ENCODE measurements at regions of chr9 and their contacts with region 1.

Region 1: DNA sequence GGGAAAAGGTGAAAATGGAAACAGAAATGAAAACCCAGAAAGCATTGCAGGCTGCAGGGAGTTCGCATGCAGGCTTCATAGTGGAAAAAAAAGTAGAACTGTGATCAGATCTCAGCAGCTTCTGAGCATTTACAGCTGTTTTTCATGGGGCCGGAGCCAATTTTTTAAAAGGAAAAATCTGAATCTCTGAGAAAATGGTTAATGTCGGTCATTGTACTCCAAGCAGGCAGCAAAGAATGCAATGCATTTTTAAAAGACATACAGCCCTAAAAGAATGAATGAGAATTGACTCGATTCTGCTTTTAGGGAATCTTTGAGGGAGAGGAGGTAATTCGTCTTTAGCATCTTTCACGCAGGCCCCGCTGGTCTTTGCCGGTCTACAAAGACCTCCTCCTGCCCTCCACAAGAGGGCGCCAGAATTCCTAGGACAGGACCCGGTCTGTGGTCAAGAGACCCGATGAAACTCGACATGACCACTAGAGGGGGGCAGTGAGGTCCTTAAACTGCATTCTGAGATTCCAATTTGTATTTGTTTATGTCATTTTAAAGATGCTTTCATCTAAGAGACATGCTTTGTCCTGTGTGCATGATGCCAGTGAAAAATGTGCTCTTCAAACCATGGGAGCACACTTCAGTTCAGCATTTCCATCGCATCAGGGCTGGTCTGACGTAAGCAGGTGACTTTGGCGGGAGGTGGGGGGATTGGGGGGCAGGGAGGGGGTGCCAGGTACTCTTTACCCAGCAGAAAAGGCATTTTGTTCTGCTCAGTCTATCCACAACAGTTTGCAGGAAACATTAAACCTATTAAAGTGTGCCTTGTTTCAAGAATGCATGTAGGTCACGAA is 43.7 kb upstream of the TMEM252 start:
- DNase-seq: peak; percentile 71
- H3K4me3 Mint-ChIP-seq: no peak overlapping the region
- H3K27ac Mint-ChIP-seq: peak overlapping the region; percentile 44
- H3K4me1 Mint-ChIP-seq: peaks cover 14% of the 10 kb centered on the region
- H3K27me3 Mint-ChIP-seq: no peaks in the 10 kb centered on the region

Region 2: DNA sequence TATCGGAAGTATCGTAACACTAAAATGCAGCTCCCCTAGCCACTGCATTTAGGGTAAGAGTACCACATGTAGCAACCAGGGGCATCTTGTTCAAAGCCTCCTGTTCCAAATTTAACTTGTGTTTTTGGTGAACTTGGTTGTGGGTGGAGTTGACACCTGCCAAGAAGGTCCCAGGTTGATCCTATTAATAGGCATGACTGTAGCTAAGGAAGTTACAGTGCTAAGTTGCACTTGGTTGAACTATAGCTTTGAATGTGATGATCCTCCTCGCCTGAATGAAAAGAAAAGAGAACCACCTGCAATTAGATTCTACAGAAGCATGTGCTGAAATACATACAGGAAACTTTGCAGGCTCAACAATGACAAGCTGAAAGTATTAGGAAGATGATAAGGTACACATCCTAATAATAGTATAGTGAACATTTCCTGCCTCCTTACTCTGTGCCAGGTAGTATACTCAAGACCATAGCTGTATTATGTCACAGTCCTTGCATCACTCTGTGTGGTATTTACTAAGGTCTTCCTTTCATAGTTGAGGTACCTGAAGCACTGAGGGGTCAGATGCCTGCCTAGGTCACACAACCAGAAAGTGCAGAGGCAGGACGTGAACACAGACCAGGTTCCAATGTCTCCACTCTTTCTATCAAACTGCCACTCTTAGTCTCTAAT is 56.1 kb after region 1 on chr9:
- intact Hi-C with region 1: no loop called
- DNase-seq: no peak
- H3K4me3 Mint-ChIP-seq: no peak overlapping the region
- H3K27ac Mint-ChIP-seq: peak overlapping the region; percentile 83
- H3K4me1 Mint-ChIP-seq: peaks cover 37% of the 10 kb centered on the region
- H3K27me3 Mint-ChIP-seq: no peaks in the 10 kb centered on the region

Region 3: DNA sequence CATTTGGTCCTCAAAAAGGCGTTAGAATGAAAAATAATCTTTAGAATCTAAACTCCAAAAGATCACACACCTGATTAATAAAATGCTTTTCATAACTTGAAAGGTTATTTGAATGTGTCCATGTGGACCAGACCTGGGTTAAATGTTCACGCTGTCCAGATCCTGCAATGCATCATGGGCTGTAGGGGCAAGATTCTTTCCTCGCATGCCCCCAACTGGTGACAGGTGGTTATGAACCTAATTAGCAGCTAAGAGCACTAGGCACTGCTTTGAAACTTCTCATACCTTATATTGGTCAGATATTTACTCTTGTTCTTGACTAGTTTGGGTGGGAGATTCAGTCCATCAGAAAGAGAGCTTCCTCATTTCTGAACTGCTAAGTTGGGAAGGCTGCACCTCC is 101.4 kb after region 1 on chr9:
- intact Hi-C with region 1: loop called (anchors 1 kb)
- DNase-seq: no peak
- H3K4me3 Mint-ChIP-seq: no peak overlapping the region
- H3K27ac Mint-ChIP-seq: no peak overlapping the region
- H3K4me1 Mint-ChIP-seq: peaks cover 36% of the 10 kb centered on the region
- H3K27me3 Mint-ChIP-seq: peaks cover 12% of the 10 kb centered on the region

Region 4: DNA sequence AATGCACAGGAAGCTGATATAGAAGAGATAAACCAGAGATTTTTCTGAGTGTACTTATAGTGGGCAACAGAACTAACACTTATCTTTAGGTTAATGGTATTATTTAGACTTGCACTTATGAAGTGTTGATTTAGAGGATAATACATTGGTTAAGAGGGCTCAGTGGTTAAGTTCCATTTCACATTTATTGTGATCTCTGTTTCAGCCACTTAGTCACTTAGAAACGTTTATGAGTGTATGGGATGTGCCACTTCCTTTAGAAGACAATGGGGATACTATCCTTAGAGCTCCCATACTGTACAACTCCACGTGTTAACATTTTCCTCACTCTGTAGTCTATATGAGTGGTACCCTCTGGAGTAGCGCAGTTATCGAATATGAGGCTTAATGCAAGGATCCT is 178.2 kb after region 1 on chr9:
- intact Hi-C with region 1: loop called (anchors 5 kb)
- DNase-seq: no peak
- H3K4me3 Mint-ChIP-seq: no peak overlapping the region
- H3K27ac Mint-ChIP-seq: no peak overlapping the region
- H3K4me1 Mint-ChIP-seq: peaks cover 30% of the 10 kb centered on the region
- H3K27me3 Mint-ChIP-seq: peaks cover 3% of the 10 kb centered on the region

Region 5: GRCh38 chr9:68822596-68823165 is 238.3 kb after region 1 on chr9:
- intact Hi-C with region 1: no loop called
- DNase-seq: no peak
- H3K4me3 Mint-ChIP-seq: no peak overlapping the region
- H3K27ac Mint-ChIP-seq: no peak overlapping the region
- H3K4me1 Mint-ChIP-seq: peaks cover 5% of the 10 kb centered on the region
- H3K27me3 Mint-ChIP-seq: peaks cover 2% of the 10 kb centered on the region

Region 6: GRCh38 chr9:68844631-68845612 is 260.5 kb after region 1 on chr9:
- intact Hi-C with region 1: loop called (anchors 5 kb)
- DNase-seq: no peak
- H3K4me3 Mint-ChIP-seq: no peak overlapping the region
- H3K27ac Mint-ChIP-seq: peak overlapping the region; percentile 51
- H3K4me1 Mint-ChIP-seq: peaks cover 42% of the 10 kb centered on the region
- H3K27me3 Mint-ChIP-seq: no peaks in the 10 kb centered on the region

Region 7: DNA sequence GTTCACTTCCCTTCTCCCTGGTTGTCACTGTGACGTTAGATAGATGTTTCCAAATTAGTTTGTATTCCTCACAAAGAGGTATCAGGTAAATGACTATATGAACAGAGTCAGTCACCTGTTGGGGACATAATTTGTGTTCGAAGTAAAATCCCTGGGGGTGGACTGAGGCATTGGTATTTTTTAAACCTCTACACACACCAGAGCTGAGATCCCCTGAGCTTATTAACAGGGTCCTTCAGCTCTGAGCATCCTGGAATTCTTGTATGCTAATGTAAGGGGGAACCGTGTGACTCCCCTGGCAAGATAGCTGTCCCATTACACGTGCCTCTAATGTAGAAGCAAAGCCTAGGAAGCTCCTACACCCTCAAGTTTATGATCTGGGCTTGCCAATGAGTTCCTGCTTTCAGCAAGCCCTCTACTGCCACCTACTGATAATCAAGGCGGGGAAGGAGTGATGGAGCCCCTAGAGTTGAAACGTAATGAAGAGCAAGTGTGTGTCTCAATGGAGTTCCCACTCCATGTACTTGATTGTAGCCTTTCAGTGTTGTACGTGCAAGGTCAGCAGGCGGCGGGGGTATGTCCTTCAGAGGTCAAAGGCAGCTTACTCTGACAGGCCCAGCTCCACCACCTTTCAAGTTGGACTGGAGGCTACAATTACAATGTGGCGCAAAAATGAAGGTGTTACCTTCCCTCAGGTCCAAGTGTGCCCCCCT is 415.1 kb after region 1 on chr9:
- intact Hi-C with region 1: loop called (anchors 1 kb)
- DNase-seq: peak; percentile 65
- H3K4me3 Mint-ChIP-seq: no peak overlapping the region
- H3K27ac Mint-ChIP-seq: peak overlapping the region; percentile 64
- H3K4me1 Mint-ChIP-seq: peaks cover 42% of the 10 kb centered on the region
- H3K27me3 Mint-ChIP-seq: no peaks in the 10 kb centered on the region

Measured in activated T-helper 2 cell treated with anti-CD3 and anti-CD28 coated beads, Interferon-gamma antibody, Interleukin-2, Interleukin-4, amounts not matched to agents 10 μg/mL and 5 μg/mL and 100 μg/mL, durations not matched to agents 14 hours and 24 hours and 36 hours (primary cell).